T-cell (primary cell): ENCODE measurements at regions of chr4 and their contacts with region 1.

Region 1: GRCh38 chr4:67779631-67780030 is 25.4 kb upstream of the GNRHR start:
- DNase-seq: no peak
- ATAC-seq: no peak
- H3K4me3 ChIP-seq: no peak overlapping the region
- H3K4me3 Mint-ChIP-seq: no peak overlapping the region
- H3K27ac ChIP-seq: no peak overlapping the region
- H3K27ac Mint-ChIP-seq: no peak overlapping the region
- H3K4me1 ChIP-seq: no peaks in the 10 kb centered on the region
- H3K4me1 Mint-ChIP-seq: no peaks in the 10 kb centered on the region
- H3K27me3 ChIP-seq: no peaks in the 10 kb centered on the region
- H3K27me3 Mint-ChIP-seq: no peaks in the 10 kb centered on the region

Region 2: GRCh38 chr4:66693694-66694093 is 1085.9 kb before region 1 on chr4:
- CTCF ChIA-PET with region 1: no interaction called
- POLR2A ChIA-PET with region 1: interaction called in 1 of 2 experiments, 11 read pairs
- DNase-seq: no peak
- ATAC-seq: no peak
- H3K4me3 ChIP-seq: no peak overlapping the region
- H3K4me3 Mint-ChIP-seq: no peak overlapping the region
- H3K27ac ChIP-seq: no peak overlapping the region
- H3K27ac Mint-ChIP-seq: no peak overlapping the region
- H3K4me1 ChIP-seq: no peaks in the 10 kb centered on the region
- H3K4me1 Mint-ChIP-seq: no peaks in the 10 kb centered on the region
- H3K27me3 ChIP-seq: no peaks in the 10 kb centered on the region
- H3K27me3 Mint-ChIP-seq: no peaks in the 10 kb centered on the region

Region 3: GRCh38 chr4:67366311-67366861 is 413.2 kb before region 1 on chr4:
- CTCF ChIA-PET with region 1: no interaction called
- POLR2A ChIA-PET with region 1: no interaction called
- DNase-seq: no peak
- ATAC-seq: no peak
- H3K4me3 ChIP-seq: no peak overlapping the region
- H3K4me3 Mint-ChIP-seq: no peak overlapping the region
- H3K27ac ChIP-seq: no peak overlapping the region
- H3K27ac Mint-ChIP-seq: no peak overlapping the region
- H3K4me1 ChIP-seq: no peaks in the 10 kb centered on the region
- H3K4me1 Mint-ChIP-seq: no peaks in the 10 kb centered on the region
- H3K27me3 ChIP-seq: no peaks in the 10 kb centered on the region
- H3K27me3 Mint-ChIP-seq: peaks cover 4 to 24% of the 10 kb centered on the region in 2 donors